ENCODE measurements at regions of chr12 and their contacts with region 1.

Region 1: DNA sequence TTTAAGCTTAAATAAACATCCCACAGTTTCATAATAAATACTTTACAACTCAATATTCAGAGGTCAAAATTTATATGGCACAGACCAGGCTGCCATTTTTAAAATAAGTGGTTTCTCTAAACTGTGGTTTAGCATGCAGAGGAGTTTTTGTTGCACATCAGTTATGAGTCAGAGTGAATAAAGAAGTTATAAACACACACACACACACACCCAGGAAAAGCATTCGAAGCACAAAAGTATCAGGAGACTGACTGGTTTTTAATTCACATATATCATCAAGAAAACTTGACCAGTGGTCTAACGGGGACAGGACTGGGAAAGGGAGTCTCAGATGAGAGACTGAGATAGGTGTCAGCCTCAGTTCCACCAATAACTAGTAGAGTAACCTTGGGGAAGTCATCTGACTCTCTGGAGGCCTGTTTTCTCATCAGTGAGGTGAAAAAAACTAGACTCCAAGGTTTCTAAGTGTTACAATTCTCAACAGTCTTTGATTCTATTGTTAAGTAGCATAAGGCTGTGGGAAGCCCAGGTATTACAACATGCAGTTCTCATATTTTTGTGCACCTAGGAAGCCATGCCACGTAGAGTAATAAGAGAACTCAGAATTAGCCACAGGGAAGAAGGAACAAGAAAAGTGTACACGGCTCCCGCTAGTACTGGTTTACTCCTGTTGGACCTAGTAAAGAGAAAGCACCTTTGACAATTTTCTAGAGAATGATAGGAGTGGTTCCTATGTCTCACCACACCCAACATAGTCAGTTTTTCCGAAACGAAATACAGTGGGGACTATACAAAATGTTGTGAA is 5.2 kb downstream of the PPTC7 start:
- DNase-seq: peak; percentile 72
- H3K4me3 Mint-ChIP-seq: peak overlapping the region; percentile 58
- H3K27ac Mint-ChIP-seq: peak overlapping the region; percentile 98
- H3K4me1 Mint-ChIP-seq: peaks cover 75% of the 10 kb centered on the region
- H3K27me3 Mint-ChIP-seq: no peaks in the 10 kb centered on the region

Region 2: DNA sequence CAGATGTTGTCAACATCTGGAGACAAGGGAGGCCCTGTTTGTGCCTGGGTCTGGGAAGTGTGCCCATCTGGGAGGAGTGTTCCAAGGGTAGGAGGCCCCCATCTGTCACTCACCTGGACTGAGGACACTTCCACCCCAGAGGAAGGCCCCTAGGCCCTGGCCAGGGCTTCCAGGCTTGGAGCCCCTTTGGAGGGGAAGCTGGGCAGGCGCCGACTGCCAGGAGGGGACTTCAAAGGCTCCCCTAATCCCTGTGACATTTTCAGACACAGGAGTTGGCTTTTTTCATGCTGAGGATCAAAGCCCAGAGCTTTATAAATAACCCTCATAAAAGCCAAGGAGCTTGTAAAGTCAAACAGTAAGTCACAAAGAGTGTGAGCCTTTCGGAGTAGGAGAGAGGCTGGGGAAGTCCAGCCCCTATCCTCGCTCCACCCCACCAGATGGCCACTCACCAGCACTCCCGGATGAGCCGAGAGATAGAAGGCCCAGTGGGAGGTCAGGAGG is 881.9 kb before region 1 on chr12:
- CTCF ChIA-PET with region 1: no interaction called
- intact Hi-C with region 1: no loop called
- DNase-seq: no peak
- H3K4me3 Mint-ChIP-seq: no peak overlapping the region
- H3K27ac Mint-ChIP-seq: no peak overlapping the region
- H3K4me1 Mint-ChIP-seq: no peaks in the 10 kb centered on the region
- H3K27me3 Mint-ChIP-seq: peaks cover 7% of the 10 kb centered on the region

Region 3: DNA sequence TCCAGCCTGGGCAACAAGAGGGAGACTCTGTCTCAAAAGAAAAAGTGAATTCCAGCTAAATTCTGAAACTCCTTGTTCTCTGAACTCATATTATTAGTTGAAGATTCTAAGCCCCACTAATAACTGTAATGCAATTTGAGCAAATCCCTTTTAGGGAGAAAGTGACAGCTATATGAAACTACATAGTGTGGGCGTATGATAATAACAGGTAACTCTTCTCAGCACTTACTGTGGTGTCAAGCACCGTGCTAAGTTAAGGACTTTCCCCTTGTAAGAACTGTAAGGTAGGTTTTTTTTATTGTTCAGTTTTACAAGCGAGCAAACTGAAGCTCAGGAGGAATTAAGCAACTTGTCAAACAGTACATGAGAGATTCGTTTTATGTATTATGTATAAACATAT is 573.3 kb before region 1 on chr12:
- CTCF ChIA-PET with region 1: no interaction called
- intact Hi-C with region 1: loop called (anchors 2 kb)
- DNase-seq: peak; percentile 47
- H3K4me3 Mint-ChIP-seq: no peak overlapping the region
- H3K27ac Mint-ChIP-seq: peak overlapping the region; percentile 79
- H3K4me1 Mint-ChIP-seq: peaks cover 82% of the 10 kb centered on the region
- H3K27me3 Mint-ChIP-seq: no peaks in the 10 kb centered on the region

Region 4: DNA sequence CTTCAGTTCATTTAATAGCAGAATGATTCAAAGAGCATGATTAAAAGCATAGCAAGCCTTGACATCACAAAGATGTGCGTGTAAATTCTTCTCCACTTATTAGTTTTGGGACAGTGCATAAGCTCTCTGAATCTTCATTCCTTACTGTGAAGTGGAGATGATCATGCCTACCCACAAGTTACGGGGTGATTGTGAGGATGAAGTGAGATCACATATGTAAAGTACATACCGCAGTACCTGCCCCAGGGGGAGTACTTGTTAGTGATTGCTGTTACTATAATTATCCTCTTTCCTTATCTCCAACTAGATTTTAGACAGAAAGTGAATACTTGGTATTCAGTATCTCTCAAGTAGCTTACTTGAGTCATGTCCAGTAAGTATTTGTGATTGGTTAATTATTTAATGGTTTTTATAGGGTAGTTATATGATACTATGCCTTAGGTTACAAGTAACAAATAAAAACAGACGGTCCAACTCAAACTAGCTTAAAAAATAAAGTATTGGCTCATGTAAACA is 69.8 kb before region 1 on chr12:
- CTCF ChIA-PET with region 1: interaction called, 12 read pairs
- intact Hi-C with region 1: no loop called
- DNase-seq: no peak
- H3K4me3 Mint-ChIP-seq: no peak overlapping the region
- H3K27ac Mint-ChIP-seq: no peak overlapping the region
- H3K4me1 Mint-ChIP-seq: no peaks in the 10 kb centered on the region
- H3K27me3 Mint-ChIP-seq: no peaks in the 10 kb centered on the region

Region 5: DNA sequence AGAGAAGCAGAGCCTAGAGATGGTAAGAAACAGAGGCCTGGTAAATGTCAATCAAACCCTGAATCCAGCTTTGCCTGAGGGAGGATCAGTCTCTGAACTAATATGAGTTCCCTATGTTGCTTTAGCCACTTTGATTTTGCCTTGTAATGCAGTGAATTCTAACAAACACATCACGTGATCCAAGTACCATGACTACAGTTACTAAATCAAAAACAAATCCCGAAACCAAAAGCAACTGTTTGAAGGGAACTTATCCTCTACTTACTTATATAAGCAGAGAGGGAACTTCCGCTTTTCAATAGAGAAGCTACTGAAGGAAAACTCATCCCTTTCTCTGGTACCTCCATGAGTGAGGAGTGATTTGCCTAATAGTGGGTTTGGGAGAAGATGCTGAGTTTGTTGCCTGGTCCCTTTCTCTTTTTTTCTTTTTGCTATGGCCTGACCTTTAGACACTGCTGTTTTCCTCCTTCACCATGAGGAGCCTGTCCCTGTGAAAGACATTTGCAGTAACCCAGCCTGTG is 12.9 kb after region 1 on chr12:
- CTCF ChIA-PET with region 1: interaction called, 6 read pairs
- intact Hi-C with region 1: loop called (anchors 1 kb)
- DNase-seq: no peak
- H3K4me3 Mint-ChIP-seq: peak overlapping the region; percentile 21
- H3K27ac Mint-ChIP-seq: peak overlapping the region; percentile 90
- H3K4me1 Mint-ChIP-seq: peaks cover 31% of the 10 kb centered on the region
- H3K27me3 Mint-ChIP-seq: no peaks in the 10 kb centered on the region

Region 6: DNA sequence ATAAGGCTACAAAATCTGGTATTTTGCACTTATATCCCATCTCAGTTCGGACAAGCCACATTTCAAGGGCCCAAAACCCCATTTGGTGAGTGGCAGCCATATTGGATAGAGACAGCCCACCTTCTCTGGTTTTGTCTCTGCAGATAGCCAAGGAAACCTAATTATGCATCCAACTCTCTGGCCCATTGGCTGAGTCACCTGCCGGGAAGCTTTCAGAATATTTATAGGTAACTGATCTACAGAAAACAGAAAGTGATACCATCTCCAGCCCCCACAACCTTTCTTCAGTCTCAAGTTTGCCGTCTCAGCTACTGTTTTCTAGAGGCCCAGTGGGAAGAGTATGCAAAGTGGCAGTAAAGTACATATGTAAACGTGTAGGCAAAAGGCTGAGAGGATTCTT is 198.5 kb after region 1 on chr12:
- CTCF ChIA-PET with region 1: no interaction called
- intact Hi-C with region 1: loop called (anchors 1 kb)
- DNase-seq: peak; percentile 85
- H3K4me3 Mint-ChIP-seq: peak overlapping the region; percentile 60
- H3K27ac Mint-ChIP-seq: peak overlapping the region; percentile 94
- H3K4me1 Mint-ChIP-seq: peaks cover 77% of the 10 kb centered on the region
- H3K27me3 Mint-ChIP-seq: no peaks in the 10 kb centered on the region

Measured in activated naive CD4-positive, alpha-beta T cell treated with anti-CD3 and anti-CD28 coated beads for 36 hours (primary cell).